ENCODE measurements at regions of chr5 and their contacts with region 1.

Region 1: DNA sequence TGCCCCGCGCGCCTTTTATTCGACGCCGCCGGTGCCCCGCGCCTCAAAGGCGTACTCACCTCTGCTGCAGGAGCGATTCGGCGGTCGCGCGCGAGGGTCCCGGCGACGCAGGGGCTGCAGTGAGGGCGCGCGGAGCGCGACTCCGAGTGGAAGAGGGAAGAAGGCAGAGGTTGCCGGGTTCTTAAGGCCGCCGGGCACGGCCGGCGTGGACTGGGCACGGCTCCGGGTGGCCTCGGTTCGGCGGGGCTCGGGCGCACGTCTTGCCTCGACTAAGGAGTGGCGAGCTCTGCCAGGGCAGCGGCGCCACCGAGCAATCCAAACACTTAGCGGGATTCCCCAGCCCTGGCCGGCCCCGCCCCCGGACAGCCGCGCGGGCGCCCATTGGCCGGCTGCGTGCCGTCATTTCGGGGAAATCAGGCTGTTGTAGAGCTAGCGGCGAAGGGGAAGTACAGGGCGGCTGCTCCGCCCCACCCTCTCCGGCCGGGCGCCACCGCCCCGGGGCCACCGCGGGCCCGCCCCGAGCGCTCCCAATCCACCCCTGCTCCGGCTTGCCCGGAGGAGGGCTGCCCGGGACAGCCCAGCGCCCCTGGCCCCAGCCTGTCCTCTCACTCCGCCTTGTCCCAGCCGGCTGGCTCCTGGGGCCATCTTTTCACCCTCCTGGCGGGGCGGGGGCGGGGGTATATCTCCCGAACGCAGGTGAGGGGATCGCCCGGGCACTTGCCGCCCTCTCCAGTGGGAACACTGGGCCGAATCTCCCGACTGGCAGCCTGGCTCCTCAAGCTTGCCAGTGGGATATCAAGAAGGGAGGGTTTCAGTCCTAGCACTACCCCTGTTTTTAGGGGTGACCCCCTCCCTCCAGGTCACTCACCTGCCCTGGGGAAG is at the start of gene IRF1:
- DNase-seq: peak; percentile 91
- ATAC-seq: peak; percentile 91
- H3K4me3 ChIP-seq: peak within 1 kb of the TSS; percentile 65 to 85 (median 65)
- H3K27ac ChIP-seq: peak within 1 kb of the TSS; percentile 78
- H3K4me1 ChIP-seq: peaks cover 45% of the 10 kb centered on the region
- H3K27me3 ChIP-seq: no peaks in the 10 kb centered on the region
- CTCF ChIP-seq: peak; percentile 46; the same call in 1 of the 2 replicates
- EP300 ChIP-seq: peak in 1 of 2 experiments; percentile 27; a peak in 1 of 4 replicates
- POLR2A ChIP-seq: peak in 1 of 2 experiments; percentile 91; a peak in 2 of 4 replicates
- RAD21 ChIP-seq: no peak; the same call in none of the 2 replicates
- total RNA-seq, gene IRF1: 5.8 and 8.8 TPM in 2 replicates

Region 2: GRCh38 chr5:132227485-132228240 is 263.1 kb before region 1 on chr5 and contains the start of gene P4HA2:
- CTCF ChIA-PET with region 1: no interaction called
- POLR2A ChIA-PET with region 1: no interaction called
- in situ Hi-C with region 1: no loop called
- intact Hi-C with region 1: no loop called
- DNase-seq: peak; percentile 64
- ATAC-seq: peak; percentile 90
- H3K4me3 ChIP-seq: peak within 1 kb of the TSS; percentile 81 to 88 (median 82)
- H3K27ac ChIP-seq: peak within 1 kb of the TSS; percentile 67
- H3K4me1 ChIP-seq: peaks cover 44% of the 10 kb centered on the region
- H3K27me3 ChIP-seq: peaks cover 0 to 6% of the 10 kb centered on the region in 2 experiments; a peak in 2 of 5 replicates
- CTCF ChIP-seq: peak; percentile 43; the same call in 1 of the 2 replicates
- EP300 ChIP-seq: no peak
- POLR2A ChIP-seq: peak; percentile 44 to 88; a peak in 3 of 4 replicates
- RAD21 ChIP-seq: no peak; the same call in 1 of the 2 replicates
- total RNA-seq, gene P4HA2: 16.5 and 37.7 TPM in 2 replicates

Region 3: GRCh38 chr5:132369474-132370180 is 121.1 kb before region 1 on chr5 and contains the start of gene SLC22A5:
- CTCF ChIA-PET with region 1: no interaction called
- POLR2A ChIA-PET with region 1: interaction called, 11 read pairs
- in situ Hi-C with region 1: no loop called
- intact Hi-C with region 1: no loop called
- DNase-seq: peak; percentile 62
- ATAC-seq: peak; percentile 93
- H3K4me3 ChIP-seq: peak within 1 kb of the TSS; percentile 71 to 84 (median 77)
- H3K27ac ChIP-seq: peak within 1 kb of the TSS; percentile 91
- H3K4me1 ChIP-seq: peaks cover 35% of the 10 kb centered on the region
- H3K27me3 ChIP-seq: no peaks in the 10 kb centered on the region
- CTCF ChIP-seq: no peak
- EP300 ChIP-seq: peak in 1 of 2 experiments; percentile 8; a peak in 1 of 4 replicates
- POLR2A ChIP-seq: peak; percentile 68 to 72
- RAD21 ChIP-seq: peak; percentile 52
- total RNA-seq, gene SLC22A5: 4.0 and 7.1 TPM in 2 replicates

Region 4: GRCh38 chr5:132410451-132411381 is 80.0 kb before region 1 on chr5:
- CTCF ChIA-PET with region 1: no interaction called
- POLR2A ChIA-PET with region 1: interaction called, 31 read pairs
- in situ Hi-C with region 1: no loop called
- intact Hi-C with region 1: no loop called
- DNase-seq: peak; percentile 60
- ATAC-seq: peak; percentile 93
- H3K4me3 ChIP-seq: peak overlapping the region; percentile 63 to 81 (median 74)
- H3K27ac ChIP-seq: peak overlapping the region; percentile 88
- H3K4me1 ChIP-seq: peaks cover 67% of the 10 kb centered on the region
- H3K27me3 ChIP-seq: no peaks in the 10 kb centered on the region; a peak in 1 of 5 replicates
- CTCF ChIP-seq: peak; percentile 80
- EP300 ChIP-seq: peak in 1 of 2 experiments; percentile 24; a peak in 1 of 4 replicates
- POLR2A ChIP-seq: peak; percentile 70 to 77
- RAD21 ChIP-seq: peak; percentile 91

Region 5: DNA sequence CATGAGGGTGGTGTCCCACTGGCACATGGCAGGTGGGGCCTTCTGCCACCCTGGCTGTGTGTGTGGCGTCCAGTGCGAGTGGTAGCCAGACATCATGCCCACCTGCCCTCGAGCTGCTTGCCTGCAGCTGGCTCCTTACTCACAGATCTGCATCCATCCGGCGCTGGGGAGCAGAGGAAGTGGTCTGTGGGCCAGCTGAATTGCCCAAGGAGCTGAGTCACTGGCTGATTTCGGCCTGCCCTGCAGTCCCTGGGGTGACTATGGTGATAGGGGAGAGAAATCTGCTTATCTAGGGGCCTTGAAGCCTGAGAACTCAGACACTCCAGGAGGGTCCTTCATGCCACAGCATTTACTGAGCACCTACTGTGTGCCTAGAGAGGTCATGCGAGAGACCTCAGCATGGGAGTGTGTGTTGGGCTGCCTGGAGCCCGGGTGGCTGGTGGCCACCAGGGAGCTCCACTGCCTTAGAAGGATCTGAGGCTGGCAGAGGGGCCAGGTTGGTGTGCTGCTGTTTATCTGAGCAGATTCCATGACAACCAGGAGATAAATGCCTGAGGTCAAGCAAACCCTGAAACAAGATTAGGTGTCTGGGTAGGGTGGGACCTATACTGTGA is 64.1 kb before region 1 on chr5:
- CTCF ChIA-PET with region 1: no interaction called
- POLR2A ChIA-PET with region 1: interaction called, 86 read pairs
- in situ Hi-C with region 1: loop called (anchors 10 kb)
- intact Hi-C with region 1: no loop called
- DNase-seq: peak; percentile 58
- ATAC-seq: peak; percentile 81
- H3K4me3 ChIP-seq: no peak overlapping the region
- H3K27ac ChIP-seq: no peak overlapping the region
- H3K4me1 ChIP-seq: peaks cover 76% of the 10 kb centered on the region
- H3K27me3 ChIP-seq: no peaks in the 10 kb centered on the region
- CTCF ChIP-seq: peak; percentile 71
- EP300 ChIP-seq: no peak
- POLR2A ChIP-seq: 0 out of 4 replicates have a peak, but pooled peaks of 1 of the 2 experiments have one; percentile 19
- RAD21 ChIP-seq: peak; percentile 67; the same call in 1 of the 2 replicates

Region 6: DNA sequence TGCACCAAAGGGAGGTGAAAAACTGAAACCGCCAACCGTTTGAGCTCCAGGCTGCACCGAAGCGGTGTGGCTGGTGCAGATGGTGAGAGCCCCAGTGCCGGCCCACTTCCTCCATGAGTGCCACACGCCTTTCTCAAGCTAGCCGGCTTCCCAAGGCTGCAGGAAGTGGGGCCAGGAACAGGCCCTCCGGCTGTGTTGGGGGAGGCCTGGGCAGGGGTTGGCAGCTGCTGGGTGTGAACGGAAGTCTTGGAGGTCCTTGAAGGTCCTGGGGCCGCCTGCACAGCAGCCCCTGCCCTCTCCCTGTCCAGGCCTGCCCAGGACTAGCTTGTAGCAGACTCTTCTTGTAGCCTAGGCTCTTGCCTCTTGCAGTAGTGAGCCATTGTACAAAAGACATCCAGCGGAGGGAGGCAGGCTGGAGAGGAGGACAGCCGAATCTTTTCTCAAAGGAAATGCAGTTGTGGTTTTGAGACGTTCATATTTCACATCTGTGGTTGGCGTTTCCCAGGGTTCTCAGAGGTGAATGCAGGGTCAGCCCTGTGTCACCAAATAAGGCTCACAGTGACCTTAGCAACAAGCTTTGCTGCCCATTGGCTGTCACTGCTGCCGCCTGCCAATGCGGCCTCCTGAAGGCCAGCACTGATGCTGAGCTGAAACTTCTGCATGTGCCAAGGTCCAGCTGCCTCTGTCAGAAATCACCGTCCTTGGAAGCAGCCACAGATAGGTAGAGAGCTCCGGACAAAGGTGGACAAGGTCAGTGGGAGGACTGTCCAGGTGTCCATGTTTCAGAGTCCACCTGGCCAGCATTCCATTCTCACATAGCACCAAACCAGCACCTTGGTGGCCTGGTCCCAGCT is 24.1 kb before region 1 on chr5:
- CTCF ChIA-PET with region 1: no interaction called
- POLR2A ChIA-PET with region 1: interaction called, 18 read pairs
- in situ Hi-C with region 1: no loop called
- intact Hi-C with region 1: loop called (anchors 5 kb)
- DNase-seq: peak; percentile 61
- ATAC-seq: peak; percentile 58
- H3K4me3 ChIP-seq: peak overlapping the region in 1 of 3 experiments; percentile 8; a peak in 1 of 6 replicates
- H3K27ac ChIP-seq: peak overlapping the region; percentile 46
- H3K4me1 ChIP-seq: peaks cover 92% of the 10 kb centered on the region
- H3K27me3 ChIP-seq: no peaks in the 10 kb centered on the region
- CTCF ChIP-seq: no peak
- EP300 ChIP-seq: no peak
- POLR2A ChIP-seq: no peak
- RAD21 ChIP-seq: no peak

Region 7: GRCh38 chr5:132500931-132501630 is 10.4 kb after region 1 on chr5:
- CTCF ChIA-PET with region 1: no interaction called
- POLR2A ChIA-PET with region 1: interaction called, 39 read pairs
- in situ Hi-C with region 1: no loop called
- intact Hi-C with region 1: no loop called
- DNase-seq: peak; percentile 87
- ATAC-seq: peak; percentile 52
- H3K4me3 ChIP-seq: peak overlapping the region in 1 of 3 experiments; percentile 57; a peak in 2 of 6 replicates
- H3K27ac ChIP-seq: peak overlapping the region; percentile 53
- H3K4me1 ChIP-seq: peaks cover 91% of the 10 kb centered on the region
- H3K27me3 ChIP-seq: no peaks in the 10 kb centered on the region
- CTCF ChIP-seq: peak; percentile 98
- EP300 ChIP-seq: peak in 1 of 2 experiments; percentile 83; a peak in 1 of 4 replicates
- POLR2A ChIP-seq: no peak
- RAD21 ChIP-seq: peak; percentile 94